Natural killer cell (primary cell): ENCODE measurements at regions of chr17 and their contacts with region 1.

Region 1: DNA sequence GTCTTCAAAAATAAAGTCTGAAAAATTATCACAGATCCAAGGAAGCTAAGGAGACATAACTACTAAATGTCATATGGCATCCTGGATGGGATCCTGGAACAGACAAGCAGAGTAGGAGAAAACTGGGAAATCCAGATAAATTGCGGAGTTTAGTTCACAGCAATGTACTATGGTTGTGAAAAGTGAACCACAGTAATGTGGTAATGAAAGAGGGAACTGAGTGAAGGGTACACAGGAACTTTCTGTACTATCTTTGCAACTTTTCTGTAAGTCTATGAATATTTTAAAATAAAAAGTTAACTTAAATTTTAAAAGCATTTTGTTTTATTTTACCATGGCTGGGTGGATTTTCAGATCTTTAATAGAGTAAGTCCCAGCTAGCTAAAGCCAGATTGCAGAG is 16.3 kb downstream of the SLFN12L start:
- DNase-seq: no peak
- ATAC-seq: peak; percentile 30 to 56 (median 49)
- H3K4me3 ChIP-seq: peak overlapping the region; percentile 11
- H3K4me3 Mint-ChIP-seq: peak overlapping the region; percentile 70
- H3K27ac ChIP-seq: peak overlapping the region; percentile 74
- H3K27ac Mint-ChIP-seq: peak overlapping the region; percentile 88 to 95
- H3K4me1 ChIP-seq: peaks cover 54% of the 10 kb centered on the region
- H3K4me1 Mint-ChIP-seq: peaks cover 97 to 99% of the 10 kb centered on the region in 2 donors
- H3K27me3 ChIP-seq: no peaks in the 10 kb centered on the region
- H3K27me3 Mint-ChIP-seq: no peaks in the 10 kb centered on the region
- CTCF ChIP-seq: no peak

Region 2: DNA sequence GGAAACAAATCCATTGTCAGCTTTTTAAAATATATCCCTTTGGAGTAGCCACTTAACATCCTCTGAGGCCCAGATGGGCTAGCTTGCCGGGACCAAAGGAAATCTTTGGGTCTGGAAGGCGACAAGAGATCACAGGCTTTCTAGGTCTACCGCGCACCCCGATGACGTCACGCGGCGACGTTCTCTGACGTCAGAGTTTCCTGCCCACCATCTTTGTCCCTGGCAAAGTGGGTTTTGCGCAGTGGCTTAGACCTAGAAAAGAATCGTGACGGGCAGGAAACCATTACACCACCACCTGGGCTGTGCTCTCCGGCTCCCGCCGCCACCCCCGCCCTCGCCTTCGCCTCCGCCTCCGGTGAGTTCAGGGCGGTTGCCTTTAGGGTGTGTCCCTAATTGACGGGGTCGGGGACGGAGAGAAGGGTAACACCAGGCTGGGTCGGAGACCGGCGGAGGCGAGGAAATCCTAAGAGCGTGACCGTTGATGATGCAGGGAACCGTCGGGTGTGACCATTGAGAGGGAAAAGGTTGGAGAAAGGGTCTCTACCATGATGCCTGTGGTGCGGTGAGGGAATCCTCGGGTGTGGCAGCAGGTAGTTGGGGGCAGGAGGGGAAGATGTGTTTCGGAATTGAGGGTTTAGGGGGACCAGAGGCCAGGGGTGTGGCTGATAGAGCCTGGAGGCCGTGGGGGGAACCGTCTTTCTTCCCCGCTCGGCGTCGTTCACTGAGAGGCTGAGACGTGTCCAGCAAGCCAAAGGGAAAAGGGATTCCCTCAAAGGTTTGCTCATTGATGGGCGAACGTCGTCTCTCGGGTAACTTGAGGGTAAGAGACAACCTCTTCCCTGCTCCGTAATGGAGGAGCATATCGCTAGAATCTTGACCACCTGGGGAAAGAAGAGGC is 66.2 kb after region 1 on chr17 and contains the start of gene AP2B1:
- intact Hi-C with region 1: loop called (anchors 10 kb)
- DNase-seq: peak; percentile 99
- ATAC-seq: peak; percentile 94 to 98 (median 98)
- H3K4me3 ChIP-seq: peak within 1 kb of the TSS; percentile 70
- H3K4me3 Mint-ChIP-seq: peak within 1 kb of the TSS; percentile 94
- H3K27ac ChIP-seq: peak within 1 kb of the TSS; percentile 88
- H3K27ac Mint-ChIP-seq: peak within 1 kb of the TSS; percentile 94 to 100
- H3K4me1 ChIP-seq: peaks cover 13% of the 10 kb centered on the region
- H3K4me1 Mint-ChIP-seq: peaks cover 28 to 33% of the 10 kb centered on the region in 2 donors
- H3K27me3 ChIP-seq: no peaks in the 10 kb centered on the region
- H3K27me3 Mint-ChIP-seq: peaks cover 0 to 9% of the 10 kb centered on the region in 2 donors
- CTCF ChIP-seq: no peak
- total RNA-seq, gene AP2B1: 111 to 148 (median 139) TPM

Region 3: DNA sequence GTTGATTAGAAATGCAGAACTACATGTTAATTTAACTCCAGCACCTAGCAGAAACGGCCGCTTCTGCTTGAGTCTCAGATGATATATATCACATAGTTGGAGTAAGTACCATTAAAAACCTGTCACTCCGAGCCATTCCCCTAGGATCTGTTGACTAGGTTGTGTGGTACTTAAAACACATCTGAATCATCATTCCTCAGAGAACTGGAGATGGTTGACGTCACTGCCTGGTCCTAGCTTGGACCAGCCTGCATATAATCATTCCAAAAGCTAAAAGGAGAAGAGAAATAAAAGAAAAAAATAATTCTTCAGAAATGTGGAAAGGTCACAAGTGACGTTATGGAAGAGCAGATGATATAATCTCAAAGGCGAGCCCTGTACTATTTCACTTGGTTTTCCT is 179.0 kb after region 1 on chr17:
- intact Hi-C with region 1: no loop called
- DNase-seq: no peak
- ATAC-seq: no peak
- H3K4me3 ChIP-seq: no peak overlapping the region
- H3K4me3 Mint-ChIP-seq: no peak overlapping the region
- H3K27ac ChIP-seq: no peak overlapping the region
- H3K27ac Mint-ChIP-seq: no peak overlapping the region
- H3K4me1 ChIP-seq: no peaks in the 10 kb centered on the region
- H3K4me1 Mint-ChIP-seq: peaks cover 7 to 12% of the 10 kb centered on the region in 2 donors
- H3K27me3 ChIP-seq: no peaks in the 10 kb centered on the region
- H3K27me3 Mint-ChIP-seq: no peaks in the 10 kb centered on the region
- CTCF ChIP-seq: no peak

Region 4: DNA sequence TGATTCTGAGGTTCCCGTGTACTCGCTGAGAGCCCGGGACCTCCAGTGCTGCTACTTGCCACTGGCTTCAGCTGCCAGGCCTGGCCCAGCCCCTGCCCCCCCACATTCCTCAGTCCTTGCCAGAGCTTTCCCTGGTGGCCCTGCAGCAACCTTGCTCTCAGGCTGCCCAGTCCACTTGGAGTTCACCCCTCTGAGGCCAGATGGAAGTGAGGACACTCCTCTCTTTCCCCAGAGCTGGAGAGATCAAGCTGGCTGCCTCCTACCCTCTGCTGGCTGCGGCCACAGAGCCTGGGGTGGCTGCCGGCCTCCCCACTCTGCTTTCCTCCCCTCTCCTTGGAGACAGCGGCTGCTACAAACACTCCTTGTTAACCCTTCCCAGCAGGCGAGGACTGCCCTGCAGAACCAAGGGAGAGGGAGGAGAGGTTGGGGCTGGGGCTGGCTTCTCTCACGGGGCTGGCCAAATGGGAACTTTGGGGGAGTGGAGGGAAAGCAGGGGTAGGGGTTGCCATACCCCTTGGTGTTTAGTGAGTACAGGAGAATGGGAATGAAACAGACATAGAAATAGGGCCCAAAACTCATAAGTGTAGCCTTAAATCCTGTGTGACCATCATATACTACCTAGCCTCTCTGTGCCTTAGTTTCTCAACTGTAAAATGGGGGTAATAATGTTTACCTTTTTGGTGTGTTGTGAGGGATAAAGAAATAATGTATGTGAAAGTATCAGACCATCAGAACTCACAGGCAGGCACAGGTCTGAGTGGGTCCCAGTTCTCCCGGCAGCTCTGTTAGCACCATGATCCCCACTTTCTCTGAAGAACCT is 232.0 kb after region 1 on chr17 and contains the start of gene GAS2L2:
- intact Hi-C with region 1: no loop called
- DNase-seq: no peak
- ATAC-seq: no peak
- H3K4me3 ChIP-seq: no peak within 1 kb of the TSS
- H3K4me3 Mint-ChIP-seq: no peak within 1 kb of the TSS
- H3K27ac ChIP-seq: no peak within 1 kb of the TSS
- H3K27ac Mint-ChIP-seq: no peak within 1 kb of the TSS
- H3K4me1 ChIP-seq: no peaks in the 10 kb centered on the region
- H3K4me1 Mint-ChIP-seq: peaks cover 0 to 4% of the 10 kb centered on the region in 2 donors
- H3K27me3 ChIP-seq: peaks cover 7% of the 10 kb centered on the region
- H3K27me3 Mint-ChIP-seq: peaks cover 34 to 39% of the 10 kb centered on the region in 2 donors
- CTCF ChIP-seq: no peak
- total RNA-seq, gene GAS2L2: 0.23 TPM in 1 of 3 donors, not detected in the others